BJ (cell line): ENCODE measurements at regions of chr17 and their contacts with region 1.

Region 1: GRCh38 chr17:45640141-45640850 is 143.8 kb upstream of the CRHR1 start:
- DNase-seq: no peak
- H3K4me3 ChIP-seq: no peak overlapping the region
- H3K27me3 ChIP-seq: no peaks in the 10 kb centered on the region
- CTCF ChIP-seq: peak; percentile 96

Region 2: DNA sequence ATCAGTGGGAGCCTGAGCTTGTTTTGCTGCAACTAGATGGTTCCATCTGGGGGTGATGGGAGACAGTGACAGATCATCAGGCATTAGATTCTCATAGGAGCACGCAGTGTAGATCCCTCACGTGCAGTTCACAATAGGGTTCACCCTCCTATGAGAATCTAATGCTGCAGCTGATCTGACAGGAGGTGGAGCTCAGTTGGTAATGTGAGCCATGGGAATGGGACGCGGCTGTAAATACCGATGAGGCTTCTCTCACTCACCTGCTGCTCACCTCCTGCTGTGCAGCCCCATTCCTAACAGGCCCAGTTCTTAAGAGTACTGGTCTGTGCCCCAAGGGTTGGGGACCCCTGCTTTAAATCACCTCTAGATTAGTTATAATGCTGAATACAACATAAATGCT is 12.3 kb before region 1 on chr17:
- CTCF ChIA-PET with region 1: interaction called, 19 read pairs
- POLR2A ChIA-PET with region 1: interaction called, 3 read pairs
- DNase-seq: no peak
- H3K4me3 ChIP-seq: no peak overlapping the region
- H3K27me3 ChIP-seq: no peaks in the 10 kb centered on the region
- CTCF ChIP-seq: no peak

Region 3: DNA sequence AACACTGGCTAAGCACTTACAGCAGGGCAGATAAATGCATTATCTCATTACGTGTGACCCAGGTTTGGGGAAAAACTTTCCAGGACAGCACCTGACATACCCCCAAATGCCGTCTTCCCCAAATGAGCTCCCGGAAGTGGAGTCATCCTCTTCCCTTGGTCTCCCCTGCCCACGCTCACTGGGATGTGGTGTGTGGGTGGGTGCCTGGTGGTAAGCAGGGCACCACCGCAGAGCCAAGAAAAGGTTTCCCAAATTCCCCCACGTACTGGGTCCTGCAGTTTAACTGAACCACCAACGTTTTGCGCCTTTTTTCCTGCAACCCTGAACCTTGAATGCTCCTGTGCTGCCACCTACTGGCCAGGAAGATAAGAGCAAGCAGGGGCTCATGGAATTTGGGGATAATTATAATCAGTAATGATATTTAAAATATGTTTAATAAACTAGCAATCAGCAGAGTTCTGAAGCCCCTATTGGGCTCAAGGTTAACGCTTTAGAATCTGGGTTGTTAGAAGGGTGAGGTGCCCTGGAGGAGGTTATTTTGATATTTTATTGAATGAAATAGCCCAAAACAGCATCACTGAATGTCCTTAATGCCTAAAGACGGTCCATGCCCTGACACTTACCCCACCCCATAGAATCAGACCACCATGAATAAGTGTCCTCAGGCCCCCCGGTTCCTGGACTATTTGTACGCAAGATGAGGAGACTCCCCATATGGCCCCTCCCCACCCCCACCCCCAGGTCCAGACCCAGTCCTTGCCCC is 212.4 kb after region 1 on chr17:
- CTCF ChIA-PET with region 1: interaction called, 28 read pairs
- POLR2A ChIA-PET with region 1: no interaction called
- DNase-seq: no peak
- H3K4me3 ChIP-seq: no peak overlapping the region
- H3K27me3 ChIP-seq: peaks cover 6% of the 10 kb centered on the region
- CTCF ChIP-seq: peak; percentile 89